HEK293 (cell line): ENCODE measurements at regions of chr22 and their contacts with region 1.

Region 1: DNA sequence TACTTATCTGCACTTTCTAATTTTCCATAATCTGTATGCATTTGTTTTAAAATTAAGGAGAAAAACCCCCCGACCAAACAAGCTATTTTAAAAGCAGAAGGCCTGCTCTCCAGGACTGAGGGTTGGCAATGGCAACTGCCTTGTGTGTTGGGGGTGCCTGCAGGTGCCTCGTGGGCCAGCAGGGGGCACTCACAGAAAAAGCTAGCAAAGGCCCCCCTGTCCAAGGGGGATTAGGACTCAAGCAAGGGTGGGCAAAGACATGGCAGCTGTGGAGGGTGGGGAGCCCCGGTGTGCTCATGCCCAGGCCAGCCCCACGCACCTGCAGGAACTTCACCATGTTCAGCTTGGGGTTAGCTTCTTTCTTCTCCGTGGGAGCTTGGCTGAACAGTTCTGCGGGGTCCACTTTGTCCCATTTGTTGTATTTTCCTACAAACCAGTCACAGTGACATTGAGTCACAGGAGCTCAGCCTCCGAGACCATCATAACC is 10.3 kb downstream of the TOP3B start:
- H3K4me3 ChIP-seq: no peak overlapping the region
- H3K27ac ChIP-seq: no peak overlapping the region
- H3K4me1 ChIP-seq: no peaks in the 10 kb centered on the region
- CTCF ChIP-seq: peak; percentile 64

Region 2: GRCh38 chr22:21778705-21779363 is 193.5 kb before region 1 on chr22:
- CTCF ChIA-PET with region 1: no interaction called
- POLR2A ChIA-PET with region 1: no interaction called
- H3K4me3 ChIP-seq: no peak overlapping the region
- H3K27ac ChIP-seq: no peak overlapping the region
- H3K4me1 ChIP-seq: no peaks in the 10 kb centered on the region
- CTCF ChIP-seq: no peak

Region 3: DNA sequence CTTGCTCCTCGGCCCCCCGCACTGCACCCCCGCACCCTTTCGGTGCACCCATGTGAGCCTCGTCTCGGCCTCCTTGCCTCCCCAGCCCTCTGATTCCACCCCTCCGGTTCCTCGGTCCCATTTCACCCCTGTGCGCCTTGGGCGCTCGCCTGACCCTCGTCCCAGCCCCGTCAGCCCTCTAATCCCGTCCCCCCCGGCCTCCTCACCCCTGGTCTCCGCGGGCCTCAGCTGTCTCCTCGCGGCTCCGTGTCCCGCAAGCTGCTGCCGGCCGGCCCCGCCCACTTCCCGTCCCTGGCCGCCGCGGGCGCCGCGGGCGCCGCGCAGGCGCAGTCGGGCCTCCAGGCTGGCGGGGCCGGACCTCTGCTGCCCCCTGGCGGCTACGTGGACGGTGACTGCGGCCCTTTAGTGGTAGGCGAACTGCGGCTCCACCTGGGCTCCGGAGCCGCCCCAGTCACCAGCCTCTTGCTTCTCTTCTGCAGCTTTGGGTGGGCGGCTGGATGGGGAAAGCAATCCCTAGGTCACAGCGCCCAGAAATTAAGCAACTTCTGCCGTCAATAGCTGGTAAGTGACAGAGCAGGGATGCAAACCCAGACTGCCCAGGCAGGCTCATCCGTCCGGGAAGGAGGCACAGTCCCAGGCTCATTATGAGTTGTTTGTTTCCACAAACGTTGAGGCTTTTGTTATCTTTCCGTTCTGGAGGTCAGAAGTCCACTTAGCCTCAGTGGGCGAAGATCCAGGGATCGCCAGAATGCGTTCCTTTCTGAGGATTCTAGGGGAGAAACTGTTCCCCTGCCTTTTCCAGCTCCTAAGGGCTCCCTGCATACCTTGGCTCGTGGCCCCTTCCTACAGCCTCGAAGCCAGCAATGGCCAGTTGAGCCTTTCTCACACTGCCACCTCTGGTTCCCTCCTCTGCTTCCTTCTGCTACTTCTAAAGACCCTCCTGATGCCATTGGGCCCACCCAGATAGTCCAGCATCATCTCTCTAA is 19.5 kb before region 1 on chr22 and contains the start of gene PPM1F:
- CTCF ChIA-PET with region 1: interaction called, 47 read pairs
- POLR2A ChIA-PET with region 1: no interaction called
- H3K4me3 ChIP-seq: peak within 1 kb of the TSS; percentile 64
- H3K27ac ChIP-seq: no peak within 1 kb of the TSS
- H3K4me1 ChIP-seq: no peaks in the 10 kb centered on the region
- CTCF ChIP-seq: peak; percentile 62

Region 4: GRCh38 chr22:21982338-21982965 is 10.1 kb after region 1 on chr22 and contains the start of gene TOP3B:
- CTCF ChIA-PET with region 1: interaction called, 47 read pairs
- POLR2A ChIA-PET with region 1: interaction called, 11 read pairs
- H3K4me3 ChIP-seq: peak within 1 kb of the TSS; percentile 96
- H3K27ac ChIP-seq: peak within 1 kb of the TSS; percentile 48; the same call in 1 of the 2 replicates
- H3K4me1 ChIP-seq: no peaks in the 10 kb centered on the region
- CTCF ChIP-seq: no peak